Right ventricle myocardium inferior (tissue), 1 donor: ENCODE measurements at regions of chr5 and their contacts with region 1.

Region 1: GRCh38 chr5:58460732-58461286 is 923 bp upstream of the PLK2 start:
- DNase-seq: peak; percentile 94
- ATAC-seq: peak; percentile 83

Region 2: GRCh38 chr5:57298295-57298984 is 1162.4 kb before region 1 on chr5:
- intact Hi-C with region 1: loop called (anchors 1 kb)
- DNase-seq: no peak
- ATAC-seq: peak; percentile 89

Region 3: DNA sequence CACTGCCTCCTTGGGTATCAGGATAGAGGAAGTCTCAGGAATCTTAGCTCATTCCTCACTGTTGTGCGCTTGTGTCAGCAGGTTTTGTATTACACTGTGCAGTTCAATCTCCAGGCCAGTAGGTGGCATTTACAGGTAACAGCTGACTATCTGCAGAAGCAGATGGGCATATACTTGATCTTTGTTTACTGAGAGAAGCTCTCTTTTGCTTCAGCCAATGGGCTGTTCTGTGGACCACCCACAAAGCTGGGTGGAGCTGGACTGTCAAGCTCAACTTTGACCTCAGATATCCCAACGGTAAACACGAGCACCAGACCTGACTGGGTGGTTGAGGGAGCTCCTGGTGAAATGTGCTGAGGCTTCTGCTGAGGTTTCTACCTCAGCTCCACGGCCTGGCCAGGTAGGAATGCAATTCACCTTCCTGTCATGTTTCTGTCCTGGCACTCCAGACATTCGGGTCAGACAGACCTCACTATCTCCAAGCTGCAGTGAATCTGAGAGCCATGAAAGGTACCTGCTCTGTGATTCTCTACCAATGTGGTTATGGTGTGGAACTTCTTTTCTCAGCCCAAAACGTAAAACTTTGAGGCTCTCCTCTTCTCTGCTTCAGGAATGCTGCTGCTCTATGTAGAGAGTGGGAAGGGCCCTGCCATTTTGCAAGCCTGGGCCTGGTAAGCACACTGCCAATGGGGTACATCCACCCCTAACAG is 810.3 kb before region 1 on chr5:
- intact Hi-C with region 1: loop called (anchors 5 kb)
- DNase-seq: no peak
- ATAC-seq: no peak

Region 4: DNA sequence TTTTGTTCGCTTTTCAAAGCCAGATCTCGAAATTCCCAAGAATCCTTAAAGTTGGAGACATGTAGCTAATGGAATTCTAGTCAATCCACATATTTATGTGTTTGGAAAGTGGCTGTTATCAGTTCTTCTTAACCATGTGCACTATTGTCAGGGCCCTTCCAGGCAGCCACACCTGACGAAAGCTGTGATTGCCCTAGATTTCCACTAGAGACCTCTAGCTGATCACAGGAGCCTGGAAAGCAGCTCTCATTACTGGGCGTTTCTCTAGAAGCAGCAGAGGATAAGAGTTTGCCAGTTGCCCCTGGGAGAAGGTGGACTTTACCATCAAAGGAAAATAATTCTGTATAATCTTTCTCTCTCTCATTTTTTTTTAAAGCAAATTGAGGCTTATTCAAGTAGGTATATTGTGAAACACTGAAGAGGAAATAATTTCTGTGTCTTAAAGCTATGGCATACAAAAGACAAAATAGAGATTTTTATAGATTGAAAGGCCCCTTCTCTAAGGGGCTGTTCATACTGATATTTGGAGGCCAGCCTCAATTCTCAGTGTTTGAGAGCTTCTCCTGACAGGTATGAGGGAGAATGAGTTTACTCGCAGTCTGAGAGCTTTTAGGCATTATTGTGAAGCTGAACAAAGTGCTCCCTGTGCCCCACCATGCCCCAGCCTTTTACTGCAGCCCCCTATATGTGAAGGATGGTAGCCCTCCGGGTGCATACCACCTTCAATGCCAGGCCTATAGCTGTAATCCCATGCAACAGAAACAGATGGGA is 572.8 kb before region 1 on chr5:
- intact Hi-C with region 1: loop called (anchors 1 kb)
- DNase-seq: no peak
- ATAC-seq: peak; percentile 78

Region 5: DNA sequence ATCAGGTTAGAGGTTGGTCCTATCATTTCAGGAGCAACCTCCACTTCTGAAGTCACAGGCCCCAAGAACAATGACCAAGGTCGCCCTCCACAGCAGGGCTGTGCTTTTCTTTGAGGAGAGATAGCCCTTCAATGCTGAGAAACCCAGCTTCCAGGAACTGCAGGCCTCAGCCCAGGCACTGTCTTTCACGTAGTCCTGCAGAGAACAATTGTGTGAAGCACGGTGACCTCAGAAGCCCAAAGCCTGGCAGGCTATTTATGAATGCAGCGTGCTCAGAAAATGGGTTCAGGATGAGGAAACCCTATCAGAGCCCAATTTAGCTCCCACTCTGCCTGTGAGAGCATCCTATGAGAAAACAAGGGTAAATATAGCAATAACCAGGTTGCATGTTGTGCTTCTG is 389.2 kb before region 1 on chr5:
- intact Hi-C with region 1: loop called (anchors 5 kb)
- DNase-seq: peak; percentile 59
- ATAC-seq: peak; percentile 95

Region 6: DNA sequence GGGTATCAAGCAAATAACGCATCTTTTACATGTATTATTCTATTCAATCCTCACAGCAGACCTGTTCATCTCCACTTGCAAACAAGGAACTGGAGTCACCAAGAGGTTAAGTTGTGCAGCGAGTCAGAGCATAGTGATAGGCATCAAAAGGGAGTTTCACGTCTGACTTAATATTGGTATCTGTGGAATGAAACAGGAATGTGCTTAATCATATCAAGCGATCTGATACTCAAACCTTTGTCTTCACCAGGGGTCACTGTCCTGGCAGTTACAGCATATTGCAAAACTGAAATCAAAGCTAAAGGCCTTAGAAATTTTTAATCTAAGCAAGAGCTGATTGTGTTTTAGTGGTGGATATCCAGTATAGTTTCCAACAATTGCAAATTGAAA is 272.6 kb before region 1 on chr5:
- intact Hi-C with region 1: loop called (anchors 5 kb)
- DNase-seq: no peak
- ATAC-seq: no peak

Region 7: GRCh38 chr5:58259685-58260152 is 201.1 kb before region 1 on chr5:
- intact Hi-C with region 1: loop called (anchors 5 kb)
- DNase-seq: no peak
- ATAC-seq: no peak

Region 8: GRCh38 chr5:58348996-58349961 is 111.5 kb before region 1 on chr5:
- intact Hi-C with region 1: no loop called
- DNase-seq: no peak
- ATAC-seq: no peak